GM10248 (cell line): ENCODE measurements at regions of chr10 and their contacts with region 1.

Region 1: DNA sequence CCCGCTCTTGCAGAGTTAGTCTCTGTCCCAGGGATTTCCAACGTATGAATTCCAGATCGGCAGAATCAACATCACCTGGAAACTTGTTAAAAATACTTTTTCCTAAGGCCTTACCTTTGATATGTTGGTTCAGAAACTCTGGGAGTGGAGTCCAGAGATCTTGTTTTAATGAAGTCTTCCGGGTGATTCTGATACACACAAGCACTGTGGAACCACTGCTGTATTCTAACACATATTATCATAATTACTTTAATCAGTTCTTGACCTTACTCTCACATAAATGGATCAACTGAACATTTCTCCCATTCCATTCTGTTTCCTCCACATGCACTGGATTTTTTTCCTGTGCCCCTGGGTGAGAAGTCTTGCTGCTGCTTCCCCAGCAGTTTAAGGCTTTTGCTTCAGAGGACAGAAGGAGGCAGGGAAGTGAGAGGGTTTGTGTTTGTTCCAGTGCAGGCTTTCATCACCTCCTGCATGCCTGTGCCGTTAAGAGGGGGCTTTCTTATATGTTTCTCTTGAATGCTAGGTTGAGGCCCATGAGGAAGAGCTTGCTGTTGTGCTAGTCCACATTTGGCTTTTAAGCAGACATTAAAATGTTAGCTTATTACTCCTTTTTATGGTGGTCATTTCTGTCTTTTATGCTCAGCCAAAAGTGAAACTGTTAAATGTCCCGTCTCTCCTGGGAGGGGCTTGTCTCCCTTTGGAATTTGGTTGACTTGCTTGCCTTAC is 32.4 kb downstream of the CCSER2 start:
- DNase-seq: no peak
- CTCF ChIP-seq: no peak

Region 2: DNA sequence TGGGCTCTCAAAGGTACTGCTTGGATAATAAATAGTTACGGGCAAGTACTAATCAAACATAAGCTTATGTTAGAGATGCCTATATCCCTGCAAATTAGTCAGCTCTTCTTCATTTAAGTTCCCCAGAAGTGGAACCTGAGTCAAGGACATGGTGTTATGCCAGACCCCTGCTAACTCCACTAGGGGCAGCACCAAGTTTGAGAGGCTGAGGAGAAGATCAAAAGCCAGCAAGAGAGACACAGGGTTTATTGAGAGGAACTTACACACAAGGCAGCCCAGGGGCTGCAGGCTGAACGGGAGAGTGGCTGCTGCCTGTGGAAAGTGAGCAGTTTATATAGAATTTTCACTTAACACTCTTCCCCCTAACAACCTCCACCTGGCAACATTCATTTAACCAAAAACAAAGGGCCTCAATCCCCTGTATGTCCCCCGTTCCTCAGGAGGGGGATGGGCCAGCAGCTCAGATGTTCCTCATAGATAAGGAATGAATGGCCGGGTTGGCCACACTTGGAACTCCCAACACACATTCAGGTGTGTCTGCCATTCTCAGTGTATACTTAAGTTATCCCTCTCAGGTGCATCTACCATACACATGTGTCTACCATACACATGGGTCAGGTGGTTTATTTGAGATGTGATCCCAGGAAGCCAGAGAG is 284.1 kb before region 1 on chr10:
- CTCF ChIA-PET with region 1: no interaction called
- POLR2A ChIA-PET with region 1: no interaction called
- DNase-seq: no peak
- CTCF ChIP-seq: no peak

Region 3: DNA sequence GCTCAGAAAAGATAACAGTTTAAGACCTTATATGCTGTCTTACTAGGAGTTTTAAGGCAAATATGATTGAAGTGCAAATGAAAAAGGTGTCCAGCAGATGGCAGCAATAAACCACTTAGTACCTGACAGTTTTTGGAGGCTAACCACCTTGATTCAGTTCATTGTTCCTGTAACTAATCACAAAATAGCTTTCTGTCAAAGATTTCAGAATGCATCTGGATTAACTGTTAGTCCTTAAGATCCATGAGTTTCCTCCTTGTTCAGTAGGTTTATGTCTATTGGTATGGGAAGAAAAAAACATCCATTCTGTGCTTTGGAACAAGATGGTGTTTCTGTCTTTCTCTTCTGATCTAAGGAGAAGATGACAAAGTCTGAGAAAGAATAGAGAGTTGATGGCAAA is 14.2 kb after region 1 on chr10:
- CTCF ChIA-PET with region 1: interaction called, 10 read pairs
- POLR2A ChIA-PET with region 1: no interaction called
- DNase-seq: peak; percentile 16
- CTCF ChIP-seq: peak; percentile 68

Region 4: DNA sequence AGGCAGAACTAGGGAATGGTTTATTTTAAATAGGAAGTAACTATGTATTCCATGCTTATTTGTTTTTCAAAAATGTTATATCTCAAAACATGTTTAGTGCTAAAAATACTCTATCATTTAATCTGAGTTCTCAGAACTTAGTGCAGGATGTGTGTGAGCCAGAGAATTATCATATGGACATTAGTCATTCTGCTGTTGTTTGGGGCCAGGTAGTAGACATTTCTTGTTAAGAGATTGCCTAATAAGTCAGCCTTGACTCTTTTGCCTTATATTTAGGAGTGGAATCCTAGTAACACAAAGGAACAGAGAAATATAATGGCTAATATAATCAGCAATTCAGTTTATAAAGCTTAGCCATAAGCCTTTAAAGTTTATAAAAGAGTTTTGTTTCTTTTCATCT is 117.3 kb after region 1 on chr10:
- CTCF ChIA-PET with region 1: no interaction called
- POLR2A ChIA-PET with region 1: no interaction called
- DNase-seq: no peak
- CTCF ChIP-seq: no peak